BJ (cell line): ENCODE measurements at regions of chr2 and their contacts with region 1.

Region 1: DNA sequence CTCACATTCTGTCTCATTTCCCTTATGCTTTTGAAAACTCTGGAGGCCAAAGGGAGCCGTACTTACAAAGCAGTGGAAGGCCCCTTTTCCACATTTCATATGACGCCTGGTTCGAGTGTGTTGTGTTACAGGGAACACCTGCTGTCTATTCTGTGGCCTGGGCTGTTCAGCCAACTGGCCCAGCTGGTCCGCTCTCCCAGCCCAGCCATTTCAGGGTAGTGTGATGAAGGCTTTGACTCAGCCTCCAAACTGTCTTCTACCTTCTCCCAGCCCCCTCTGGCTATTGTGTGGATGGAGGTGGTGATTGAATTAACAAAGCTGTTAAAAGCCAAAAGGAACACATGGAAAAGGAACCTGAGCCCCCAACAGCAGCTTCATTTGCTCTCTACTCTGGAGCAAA is 233.8 kb downstream of the ICOS start:
- DNase-seq: no peak
- H3K4me3 ChIP-seq: no peak overlapping the region
- H3K27me3 ChIP-seq: 0 out of 2 replicates have a peak, but pooled peaks cover 2% of the 10 kb centered on the region
- CTCF ChIP-seq: no peak

Region 2: GRCh38 chr2:203763938-203764664 is 406.3 kb before region 1 on chr2:
- CTCF ChIA-PET with region 1: no interaction called
- POLR2A ChIA-PET with region 1: no interaction called
- DNase-seq: no peak
- H3K4me3 ChIP-seq: no peak overlapping the region
- H3K27me3 ChIP-seq: no peaks in the 10 kb centered on the region
- CTCF ChIP-seq: no peak

Region 3: GRCh38 chr2:204145263-204145751 is 25.1 kb before region 1 on chr2:
- CTCF ChIA-PET with region 1: interaction called, 13 read pairs
- POLR2A ChIA-PET with region 1: no interaction called
- DNase-seq: no peak
- H3K4me3 ChIP-seq: peak overlapping the region; percentile 28
- H3K27me3 ChIP-seq: no peaks in the 10 kb centered on the region
- CTCF ChIP-seq: peak; percentile 95

Region 4: GRCh38 chr2:204234879-204235278 is 64.5 kb after region 1 on chr2:
- CTCF ChIA-PET with region 1: no interaction called
- POLR2A ChIA-PET with region 1: no interaction called
- DNase-seq: no peak
- H3K4me3 ChIP-seq: no peak overlapping the region
- H3K27me3 ChIP-seq: no peaks in the 10 kb centered on the region
- CTCF ChIP-seq: no peak

Region 5: GRCh38 chr2:204608237-204608939 is 438.0 kb after region 1 on chr2:
- CTCF ChIA-PET with region 1: no interaction called
- POLR2A ChIA-PET with region 1: no interaction called
- DNase-seq: peak; percentile 83
- H3K4me3 ChIP-seq: no peak overlapping the region
- H3K27me3 ChIP-seq: no peaks in the 10 kb centered on the region
- CTCF ChIP-seq: no peak

Region 6: GRCh38 chr2:205133544-205133943 is 963.1 kb after region 1 on chr2:
- CTCF ChIA-PET with region 1: no interaction called
- POLR2A ChIA-PET with region 1: no interaction called
- DNase-seq: no peak
- H3K4me3 ChIP-seq: no peak overlapping the region
- H3K27me3 ChIP-seq: no peaks in the 10 kb centered on the region
- CTCF ChIP-seq: no peak